ENCODE measurements at regions of chr14 and their contacts with region 1.

Region 1: DNA sequence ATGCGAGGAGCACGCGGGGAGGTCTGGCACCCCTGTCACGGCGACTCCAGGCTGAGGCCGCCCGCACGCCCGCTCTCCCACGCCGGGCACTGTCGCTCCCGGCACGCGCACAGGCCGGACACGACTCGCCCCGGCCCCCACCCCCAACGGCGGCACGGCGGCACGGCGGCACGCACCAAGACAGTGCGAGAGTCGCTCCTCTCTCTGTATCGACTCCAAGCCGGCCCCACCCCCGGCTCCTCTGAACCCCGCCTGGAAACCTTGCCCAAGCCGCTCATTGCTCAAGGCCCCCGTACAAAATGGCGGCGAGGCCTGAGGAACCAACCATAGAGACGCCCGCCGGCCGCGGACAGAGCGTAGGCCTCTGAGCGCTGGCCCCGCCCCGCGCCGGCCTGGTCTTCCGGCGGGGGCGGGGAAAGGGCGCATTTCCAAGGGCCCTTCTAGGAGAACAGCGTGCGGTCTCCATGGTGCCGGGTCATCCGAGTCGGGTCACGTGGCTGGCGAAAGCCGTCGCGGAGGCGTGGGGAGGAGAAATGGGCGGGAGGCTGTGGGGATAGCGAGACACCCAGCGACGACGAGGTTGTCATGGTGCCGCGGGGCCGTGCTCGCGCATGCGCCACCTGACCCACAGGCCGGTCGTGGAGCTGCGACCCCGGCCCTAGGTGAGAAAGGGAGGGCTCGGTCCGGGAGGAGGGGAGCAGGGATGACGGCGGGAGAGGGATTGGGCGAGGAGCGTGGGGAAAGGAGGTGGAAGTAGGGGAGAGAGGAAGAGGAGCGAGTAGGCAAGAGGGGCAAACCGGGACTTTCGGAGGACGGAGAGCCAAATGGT is at the start of gene CIPC:
- DNase-seq: peak; percentile 87
- H3K4me3 ChIP-seq: peak within 1 kb of the TSS; percentile 90
- H3K27me3 ChIP-seq: no peaks in the 10 kb centered on the region
- CTCF ChIP-seq: no peak
- polyA plus RNA-seq, gene CIPC: 14.2 and 15.5 TPM in 2 replicates

Region 2: GRCh38 chr14:76720382-76720813 is 377.5 kb before region 1 on chr14:
- CTCF ChIA-PET with region 1: no interaction called
- POLR2A ChIA-PET with region 1: no interaction called
- DNase-seq: no peak
- H3K4me3 ChIP-seq: no peak overlapping the region
- H3K27me3 ChIP-seq: peaks cover 8% of the 10 kb centered on the region
- CTCF ChIP-seq: no peak

Region 3: DNA sequence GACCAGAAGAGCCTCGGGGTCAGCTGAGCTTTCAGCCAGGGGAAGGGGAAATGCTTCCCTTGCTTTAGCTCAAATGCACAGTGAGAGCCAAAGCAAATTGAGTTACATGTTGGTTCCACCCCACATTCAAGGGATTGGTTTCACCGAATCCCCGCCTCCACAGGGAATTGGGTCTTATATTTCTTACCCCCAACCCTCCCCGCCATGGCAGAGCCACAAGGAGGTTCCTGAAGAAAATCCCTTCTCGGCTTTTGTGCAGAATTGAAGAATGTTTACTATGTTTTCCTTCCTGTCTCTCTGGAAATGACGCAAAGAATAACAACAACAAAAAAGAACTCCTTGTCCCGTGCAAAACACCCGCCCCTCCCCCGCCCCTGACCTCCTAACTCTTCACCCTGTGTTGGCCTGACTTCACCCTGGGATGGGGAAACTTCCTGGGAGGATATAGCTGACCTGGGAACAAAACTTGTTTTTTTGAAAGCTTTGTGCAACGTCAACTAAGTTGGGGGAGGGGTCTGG is 21.7 kb before region 1 on chr14:
- CTCF ChIA-PET with region 1: interaction called, 74 read pairs
- POLR2A ChIA-PET with region 1: no interaction called
- DNase-seq: no peak
- H3K4me3 ChIP-seq: no peak overlapping the region
- H3K27me3 ChIP-seq: no peaks in the 10 kb centered on the region
- CTCF ChIP-seq: no peak

Region 4: GRCh38 chr14:77086017-77086736 is 11.7 kb before region 1 on chr14:
- CTCF ChIA-PET with region 1: interaction called, 49 read pairs
- POLR2A ChIA-PET with region 1: no interaction called
- DNase-seq: no peak
- H3K4me3 ChIP-seq: no peak overlapping the region
- H3K27me3 ChIP-seq: peaks cover 7% of the 10 kb centered on the region
- CTCF ChIP-seq: no peak

Region 5: GRCh38 chr14:77124345-77125280 is 26.7 kb after region 1 on chr14:
- CTCF ChIA-PET with region 1: interaction called, 11 read pairs
- POLR2A ChIA-PET with region 1: no interaction called
- DNase-seq: no peak
- H3K4me3 ChIP-seq: peak overlapping the region; percentile 45
- H3K27me3 ChIP-seq: peaks cover 19% of the 10 kb centered on the region
- CTCF ChIP-seq: no peak

Region 6: DNA sequence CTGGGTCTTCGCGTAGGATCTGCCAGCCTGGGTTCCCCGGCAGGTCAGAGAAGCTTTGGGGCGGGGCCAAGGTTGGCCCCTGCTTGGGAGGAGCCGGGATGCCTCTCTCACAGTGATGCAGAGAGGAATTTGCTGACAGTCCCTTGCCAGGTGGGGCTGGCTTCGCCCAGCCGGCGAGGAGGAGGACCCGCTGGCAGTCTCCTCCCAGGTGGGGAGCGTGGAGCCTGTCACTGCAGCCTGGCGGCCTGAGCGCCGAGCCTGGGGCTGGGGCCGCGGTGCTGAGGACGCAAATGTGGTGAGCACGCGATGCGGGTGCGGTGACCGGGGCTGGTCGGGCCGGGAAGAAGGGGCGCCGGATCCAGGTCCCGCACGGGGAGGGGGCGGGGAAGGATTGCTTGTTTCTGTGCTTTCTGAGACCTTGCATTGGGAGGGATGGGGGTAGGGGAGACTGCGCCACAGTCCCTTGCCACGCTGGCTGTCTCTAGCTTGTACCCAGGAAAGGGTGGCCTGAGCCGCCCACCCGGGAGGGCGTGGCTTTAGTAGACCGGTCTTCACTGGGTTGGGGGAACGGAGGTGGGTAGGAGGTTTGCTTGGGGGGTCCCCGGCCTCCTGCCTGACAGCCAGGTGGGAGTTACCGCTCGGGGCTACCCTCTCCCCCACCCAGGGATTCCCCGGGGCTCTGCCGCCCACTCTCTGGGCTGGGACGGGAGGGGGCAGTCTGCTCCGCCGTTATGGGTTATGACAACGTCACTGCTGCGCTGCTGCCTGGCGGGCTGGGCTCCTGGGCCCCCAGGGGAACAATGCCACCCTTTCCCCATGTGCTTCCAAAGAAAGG is 83.9 kb after region 1 on chr14 and contains the start of gene TMEM63C:
- CTCF ChIA-PET with region 1: no interaction called
- POLR2A ChIA-PET with region 1: no interaction called
- DNase-seq: no peak
- H3K4me3 ChIP-seq: no peak within 1 kb of the TSS
- H3K27me3 ChIP-seq: peaks cover 15% of the 10 kb centered on the region
- CTCF ChIP-seq: no peak
- polyA plus RNA-seq, gene TMEM63C: not detected in 2 replicates

Measured in BJ (cell line).